K562 (cell line): ENCODE measurements at regions of chr21 and their contacts with region 1.

Region 1: DNA sequence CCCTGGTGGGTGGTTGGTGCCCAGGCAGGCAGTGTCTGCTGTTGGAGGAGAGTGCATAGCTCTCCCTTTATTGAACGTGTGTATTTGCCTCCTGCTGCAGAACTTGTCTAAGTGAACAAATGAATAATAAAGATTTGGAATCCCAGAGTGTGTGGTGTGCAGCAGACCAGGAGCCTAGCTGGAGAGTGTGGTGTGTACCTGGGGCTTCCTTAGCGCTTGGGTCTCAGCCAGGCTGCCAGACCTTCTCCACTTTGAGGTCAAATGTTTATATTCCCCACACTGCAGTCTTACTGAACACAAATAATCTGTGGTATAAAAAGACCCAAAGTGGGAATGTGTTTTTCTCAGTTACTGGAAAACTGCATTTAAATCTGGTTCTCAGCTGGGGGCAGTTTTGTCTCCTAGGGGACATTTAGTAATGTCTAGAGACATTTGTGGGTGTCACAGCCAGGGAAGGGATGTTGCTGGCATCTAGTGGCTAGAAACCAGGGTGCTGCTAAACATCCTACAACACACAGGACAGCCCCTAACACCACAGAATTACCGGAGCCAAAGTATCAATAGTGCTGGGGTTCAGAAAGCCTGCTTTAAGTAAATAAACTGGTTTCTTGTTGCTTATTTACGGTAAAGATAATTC is 23.6 kb downstream of the SLC37A1 start:
- DNase-seq: peak in 2 of 4 experiments; percentile 36 to 48
- ATAC-seq: peak; percentile 63
- H3K4me3 ChIP-seq: no peak overlapping the region
- H3K27ac ChIP-seq: no peak overlapping the region
- H3K4me1 ChIP-seq: peaks cover 9 to 10% of the 10 kb centered on the region in 2 experiments
- H3K27me3 ChIP-seq: peaks cover 48 to 67% of the 10 kb centered on the region in 2 experiments
- CTCF ChIP-seq: peak; percentile 68 to 78 (median 68)
- EP300 ChIP-seq: no peak
- POLR2A ChIP-seq: no peak
- RAD21 ChIP-seq: peak; percentile 68 to 76

Region 2: GRCh38 chr21:42360317-42360716 is 176.9 kb before region 1 on chr21:
- CTCF ChIA-PET with region 1: no interaction called
- POLR2A ChIA-PET with region 1: no interaction called
- in situ Hi-C with region 1: no loop called
- intact Hi-C with region 1: loop called (anchors 10 kb)
- DNase-seq: peak in 3 of 4 experiments; percentile 36 to 55 (median 55)
- ATAC-seq: peak; percentile 51; the same call in 2 of the 3 replicates
- H3K4me3 ChIP-seq: no peak overlapping the region
- H3K27ac ChIP-seq: no peak overlapping the region
- H3K4me1 ChIP-seq: no peaks in the 10 kb centered on the region; a peak in 1 of 5 replicates
- H3K27me3 ChIP-seq: peaks cover 27 to 69% of the 10 kb centered on the region in 2 experiments
- CTCF ChIP-seq: peak; percentile 61 to 77 (median 63); a peak in 5 of 6 replicates
- EP300 ChIP-seq: no peak
- POLR2A ChIP-seq: no peak
- RAD21 ChIP-seq: peak in 1 of 2 experiments; percentile 56; a peak in 2 of 4 replicates

Region 3: GRCh38 chr21:42524349-42525151 is 12.7 kb before region 1 on chr21:
- CTCF ChIA-PET with region 1: no interaction called
- POLR2A ChIA-PET with region 1: interaction called, 11 read pairs
- in situ Hi-C with region 1: no loop called
- intact Hi-C with region 1: no loop called
- DNase-seq: no peak
- ATAC-seq: peak; percentile 20; the same call in 2 of the 3 replicates
- H3K4me3 ChIP-seq: no peak overlapping the region
- H3K27ac ChIP-seq: no peak overlapping the region
- H3K4me1 ChIP-seq: peaks cover 0 to 4% of the 10 kb centered on the region in 2 experiments; a peak in 2 of 5 replicates
- H3K27me3 ChIP-seq: peaks cover 55 to 78% of the 10 kb centered on the region in 2 experiments
- CTCF ChIP-seq: no peak
- EP300 ChIP-seq: no peak
- POLR2A ChIP-seq: no peak
- RAD21 ChIP-seq: no peak

Region 4: GRCh38 chr21:42574234-42575027 is 37.2 kb after region 1 on chr21:
- CTCF ChIA-PET with region 1: interaction called, 8 read pairs
- POLR2A ChIA-PET with region 1: interaction called, 5 read pairs
- in situ Hi-C with region 1: no loop called
- intact Hi-C with region 1: loop called (anchors 1 kb)
- DNase-seq: peak; percentile 45 to 55 (median 50)
- ATAC-seq: peak; percentile 82
- H3K4me3 ChIP-seq: no peak overlapping the region
- H3K27ac ChIP-seq: no peak overlapping the region
- H3K4me1 ChIP-seq: peaks cover 0 to 14% of the 10 kb centered on the region in 2 experiments; a peak in 3 of 5 replicates
- H3K27me3 ChIP-seq: peaks cover 18 to 59% of the 10 kb centered on the region in 2 experiments
- CTCF ChIP-seq: peak; percentile 49 to 78 (median 68)
- EP300 ChIP-seq: no peak
- POLR2A ChIP-seq: no peak
- RAD21 ChIP-seq: peak; percentile 32 to 48

Region 5: DNA sequence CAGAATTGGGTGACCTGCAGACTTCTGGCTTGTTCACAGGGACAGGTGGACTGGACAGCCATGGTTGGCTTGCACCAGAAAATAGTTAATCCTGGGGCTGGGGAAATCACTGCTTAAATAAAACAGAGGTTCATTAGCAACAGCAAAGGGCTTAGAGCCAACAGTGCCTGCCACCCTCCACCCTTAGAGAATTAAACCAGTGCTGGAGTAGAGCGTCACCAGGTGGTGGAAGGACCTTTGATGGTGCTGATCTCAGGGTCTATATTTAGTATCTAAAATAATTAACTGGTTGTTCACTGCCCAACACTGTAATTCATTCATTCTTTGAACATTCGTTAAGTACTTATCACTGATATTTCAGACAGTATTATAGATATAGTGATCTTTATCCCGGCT is 81.5 kb after region 1 on chr21:
- CTCF ChIA-PET with region 1: no interaction called
- POLR2A ChIA-PET with region 1: interaction called, 4 read pairs
- in situ Hi-C with region 1: no loop called
- intact Hi-C with region 1: loop called (anchors 1 kb)
- DNase-seq: peak in 1 of 4 experiments; percentile 18
- ATAC-seq: no peak
- H3K4me3 ChIP-seq: no peak overlapping the region
- H3K27ac ChIP-seq: no peak overlapping the region
- H3K4me1 ChIP-seq: peaks cover 3 to 18% of the 10 kb centered on the region in 2 experiments; a peak in 3 of 5 replicates
- H3K27me3 ChIP-seq: peaks cover 40 to 77% of the 10 kb centered on the region in 2 experiments
- CTCF ChIP-seq: peak in 2 of 3 experiments; percentile 11 to 46; a peak in 3 of 6 replicates
- EP300 ChIP-seq: no peak
- POLR2A ChIP-seq: no peak
- RAD21 ChIP-seq: peak in 1 of 2 experiments; percentile 44; a peak in 2 of 4 replicates